A549 (cell line): ENCODE measurements at regions of chr7 and their contacts with region 1.

Region 1: GRCh38 chr7:131654668-131655326 is 98.4 kb upstream of the PODXL start:
- DNase-seq: peak; percentile 87 to 89
- ATAC-seq: peak; percentile 91 to 97
- H3K4me3 ChIP-seq: no peak overlapping the region
- H3K27ac ChIP-seq: peak overlapping the region; percentile 61 to 71; a peak in 3 of 6 replicates
- H3K4me1 ChIP-seq: peaks cover 15% of the 10 kb centered on the region
- CTCF ChIP-seq: peak; percentile 74
- EP300 ChIP-seq: no peak
- POLR2A ChIP-seq: no peak
- RAD21 ChIP-seq: peak; percentile 93 to 98

Region 2: GRCh38 chr7:131293018-131293417 is 361.8 kb before region 1 on chr7:
- CTCF ChIA-PET with region 1: no interaction called
- POLR2A ChIA-PET with region 1: no interaction called
- DNase-seq: no peak
- ATAC-seq: peak; percentile 46 to 47; a peak in 4 of 6 replicates
- H3K4me3 ChIP-seq: no peak overlapping the region
- H3K27ac ChIP-seq: peak overlapping the region in 1 of 2 experiments; percentile 26; a peak in 2 of 6 replicates
- H3K4me1 ChIP-seq: peaks cover 14% of the 10 kb centered on the region
- CTCF ChIP-seq: no peak
- EP300 ChIP-seq: no peak
- POLR2A ChIP-seq: no peak
- RAD21 ChIP-seq: no peak

Region 3: GRCh38 chr7:131513245-131514061 is 141.3 kb before region 1 on chr7:
- CTCF ChIA-PET with region 1: interaction called, 212 read pairs
- POLR2A ChIA-PET with region 1: no interaction called
- DNase-seq: peak; percentile 84 to 88
- ATAC-seq: peak; percentile 95 to 98
- H3K4me3 ChIP-seq: no peak overlapping the region
- H3K27ac ChIP-seq: peak overlapping the region in 1 of 2 experiments; percentile 70; a peak in 3 of 6 replicates
- H3K4me1 ChIP-seq: peaks cover 7% of the 10 kb centered on the region; the same call in 2 of the 3 replicates
- CTCF ChIP-seq: peak; percentile 92
- EP300 ChIP-seq: no peak
- POLR2A ChIP-seq: no peak
- RAD21 ChIP-seq: peak; percentile 83 to 89

Region 4: DNA sequence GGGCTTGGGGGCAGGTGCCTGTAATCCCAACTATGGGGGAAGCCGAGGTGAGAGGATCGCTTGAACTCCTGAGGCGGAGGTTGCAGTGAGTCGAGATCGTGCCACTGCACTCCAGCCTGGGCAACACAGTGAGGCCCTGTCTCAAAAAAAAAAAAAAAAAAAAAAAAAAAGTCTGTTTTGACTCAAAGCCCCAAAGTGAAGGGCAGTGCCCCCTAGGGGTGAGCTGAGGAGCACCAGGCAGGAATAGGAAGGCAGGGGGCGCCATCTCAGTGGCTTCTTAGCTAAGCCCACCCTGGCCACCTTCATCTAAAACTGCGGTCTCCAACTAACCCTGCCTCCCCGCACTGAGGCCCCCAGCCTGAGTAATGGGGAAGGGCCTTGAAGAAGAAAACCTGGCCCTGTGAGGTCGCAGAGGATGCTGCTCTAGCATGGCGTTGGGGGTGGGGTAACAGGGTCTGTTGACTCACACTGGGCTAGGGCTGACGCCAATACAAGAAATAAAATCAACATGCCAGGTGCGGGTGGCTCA is 108.2 kb before region 1 on chr7:
- CTCF ChIA-PET with region 1: interaction called, 99 read pairs
- POLR2A ChIA-PET with region 1: no interaction called
- DNase-seq: peak in 1 of 2 experiments; percentile 72
- ATAC-seq: peak in 1 of 2 experiments; percentile 63; a peak in 3 of 6 replicates
- H3K4me3 ChIP-seq: no peak overlapping the region
- H3K27ac ChIP-seq: no peak overlapping the region
- H3K4me1 ChIP-seq: peaks cover 17% of the 10 kb centered on the region
- CTCF ChIP-seq: peak; percentile 82
- EP300 ChIP-seq: no peak
- POLR2A ChIP-seq: no peak
- RAD21 ChIP-seq: peak; percentile 26 to 54; a peak in 3 of 5 replicates

Region 5: DNA sequence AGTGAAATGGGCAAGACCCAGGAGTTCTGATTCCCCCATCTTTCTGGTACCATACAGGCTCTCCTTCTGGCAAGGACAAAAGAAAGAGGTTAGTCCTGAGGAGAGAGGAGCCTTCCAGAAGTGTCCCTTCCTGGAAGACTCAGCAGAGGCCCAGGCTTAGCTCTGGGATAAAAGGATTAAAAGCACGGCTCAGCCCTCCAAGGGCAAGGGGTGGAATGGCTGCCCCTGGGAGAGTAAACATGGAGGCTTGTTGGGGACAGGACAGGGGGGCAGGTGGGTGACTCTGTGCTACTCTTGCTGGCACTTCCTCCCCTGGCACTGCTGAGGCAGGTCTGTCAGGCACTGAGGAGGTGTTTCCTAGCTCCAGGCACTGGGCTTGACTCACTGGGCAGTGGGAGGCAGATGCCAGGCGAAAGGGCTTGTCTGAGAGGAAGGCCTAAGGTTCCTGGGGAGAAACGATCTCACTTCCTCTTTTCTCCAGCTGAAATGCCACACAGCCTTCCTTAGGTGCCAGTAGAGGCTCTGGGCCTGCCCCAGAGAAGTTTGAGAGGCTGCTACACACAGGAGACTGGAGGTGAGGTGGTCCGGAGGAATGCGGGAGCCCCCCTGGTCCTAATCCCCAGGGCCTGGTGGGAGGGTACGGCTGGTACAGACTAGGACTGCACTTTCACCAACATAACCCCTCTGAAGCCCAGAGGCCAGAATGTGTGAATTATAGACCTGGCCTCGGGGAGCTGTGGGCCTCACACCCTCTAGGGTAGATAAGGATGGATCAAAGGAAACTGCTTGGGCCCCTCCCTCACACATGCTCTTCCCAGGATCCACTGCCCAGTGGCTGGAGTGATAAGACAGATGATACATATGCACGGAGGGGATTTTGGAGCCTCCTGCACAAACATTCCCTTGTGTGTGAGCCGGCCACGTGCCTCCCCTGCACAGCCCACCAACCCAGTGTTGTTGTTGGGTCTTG is 35.2 kb before region 1 on chr7:
- CTCF ChIA-PET with region 1: interaction called, 30 read pairs
- POLR2A ChIA-PET with region 1: no interaction called
- DNase-seq: no peak
- ATAC-seq: peak; percentile 20 to 23; a peak in 4 of 6 replicates
- H3K4me3 ChIP-seq: no peak overlapping the region
- H3K27ac ChIP-seq: peak overlapping the region in 1 of 2 experiments; percentile 48; a peak in 2 of 6 replicates
- H3K4me1 ChIP-seq: peaks cover 5% of the 10 kb centered on the region; the same call in 1 of the 3 replicates
- CTCF ChIP-seq: no peak
- EP300 ChIP-seq: no peak
- POLR2A ChIP-seq: no peak
- RAD21 ChIP-seq: no peak

Region 6: GRCh38 chr7:131642429-131642828 is 12.4 kb before region 1 on chr7:
- CTCF ChIA-PET with region 1: interaction called, 21 read pairs
- POLR2A ChIA-PET with region 1: no interaction called
- DNase-seq: no peak
- ATAC-seq: peak in 1 of 2 experiments; percentile 30; a peak in 2 of 6 replicates
- H3K4me3 ChIP-seq: no peak overlapping the region
- H3K27ac ChIP-seq: no peak overlapping the region
- H3K4me1 ChIP-seq: no peaks in the 10 kb centered on the region
- CTCF ChIP-seq: no peak
- EP300 ChIP-seq: no peak
- POLR2A ChIP-seq: no peak
- RAD21 ChIP-seq: no peak

Region 7: DNA sequence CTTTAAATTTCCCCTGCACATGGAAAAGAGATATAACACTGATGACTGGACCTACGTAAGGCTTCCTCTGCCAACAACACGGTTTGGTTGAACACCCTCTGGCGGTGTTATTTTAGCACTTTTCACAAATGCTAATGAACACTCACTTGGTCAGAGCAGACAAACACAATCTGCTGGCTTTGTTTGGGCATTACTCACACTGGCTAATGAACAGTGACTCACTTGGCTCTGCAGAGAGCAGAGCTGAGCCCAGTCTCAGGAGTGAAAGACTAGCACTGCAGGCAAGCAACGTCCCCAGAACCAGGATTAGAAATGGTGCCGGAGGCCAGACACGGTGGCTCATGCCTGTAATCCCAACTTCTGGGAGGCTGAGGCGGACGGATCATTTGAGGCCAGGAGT is 490.7 kb after region 1 on chr7:
- CTCF ChIA-PET with region 1: no interaction called
- POLR2A ChIA-PET with region 1: no interaction called
- DNase-seq: peak; percentile 74 to 80
- ATAC-seq: peak; percentile 91 to 94
- H3K4me3 ChIP-seq: no peak overlapping the region
- H3K27ac ChIP-seq: peak overlapping the region; percentile 58 to 73
- H3K4me1 ChIP-seq: peaks cover 39% of the 10 kb centered on the region
- CTCF ChIP-seq: peak; percentile 34
- EP300 ChIP-seq: no peak
- POLR2A ChIP-seq: no peak
- RAD21 ChIP-seq: peak; percentile 46 to 49